ENCODE measurements at regions of chr5 and their contacts with region 1.

Region 1: GRCh38 chr5:36695677-36696673 is 89.6 kb downstream of the SLC1A3 start:
- DNase-seq: peak; percentile 54
- H3K4me3 ChIP-seq: no peak overlapping the region
- H3K27ac ChIP-seq: no peak overlapping the region
- H3K4me1 ChIP-seq: peaks cover 44% of the 10 kb centered on the region
- H3K27me3 ChIP-seq: peaks cover 6% of the 10 kb centered on the region
- CTCF ChIP-seq: peak; percentile 74

Region 2: GRCh38 chr5:36414869-36415282 is 281.1 kb before region 1 on chr5:
- intact Hi-C with region 1: loop called (anchors 5 kb)
- DNase-seq: no peak
- H3K4me3 ChIP-seq: no peak overlapping the region
- H3K27ac ChIP-seq: peak overlapping the region; percentile 19
- H3K4me1 ChIP-seq: peaks cover 14% of the 10 kb centered on the region
- H3K27me3 ChIP-seq: no peaks in the 10 kb centered on the region
- CTCF ChIP-seq: peak; percentile 65

Measured in left ventricle myocardium inferior (tissue), 1 donor.